Prostate gland (tissue), 2 donors: ENCODE measurements at regions of chr9 and their contacts with region 1.

Region 1: DNA sequence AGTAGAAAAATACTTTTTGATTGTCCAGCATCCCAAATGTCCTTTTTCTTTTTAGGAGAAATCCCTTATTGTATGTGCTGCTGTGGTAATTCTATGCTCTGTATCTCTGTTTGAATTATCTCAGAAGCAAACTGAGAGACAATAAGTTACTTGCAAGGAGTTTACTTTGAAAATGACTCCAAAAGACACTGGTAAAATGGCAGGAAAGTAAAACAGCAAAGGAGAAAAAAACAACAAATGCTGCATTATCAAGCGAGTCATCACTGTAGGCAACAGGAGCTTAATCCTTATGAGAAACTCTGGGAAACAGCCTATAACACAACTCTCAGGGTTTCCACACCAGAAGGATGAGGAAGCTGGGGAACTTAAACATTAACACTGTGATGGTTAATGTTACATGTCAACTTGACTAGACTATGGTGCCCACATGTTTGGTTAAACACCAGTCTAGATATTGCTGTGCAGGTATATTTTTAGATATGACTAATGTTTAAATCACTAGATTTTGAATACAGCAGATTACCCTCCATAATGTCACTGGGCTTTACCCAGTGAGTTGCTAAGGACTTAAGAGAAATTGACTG is 92.6 kb upstream of the GAS1 start:
- DNase-seq: no peak
- H3K4me3 ChIP-seq: no peak overlapping the region
- H3K27ac ChIP-seq: no peak overlapping the region
- H3K4me1 ChIP-seq: no peaks in the 10 kb centered on the region
- H3K27me3 ChIP-seq: no peaks in the 10 kb centered on the region
- CTCF ChIP-seq: no peak
- POLR2A ChIP-seq: no peak

Region 2: DNA sequence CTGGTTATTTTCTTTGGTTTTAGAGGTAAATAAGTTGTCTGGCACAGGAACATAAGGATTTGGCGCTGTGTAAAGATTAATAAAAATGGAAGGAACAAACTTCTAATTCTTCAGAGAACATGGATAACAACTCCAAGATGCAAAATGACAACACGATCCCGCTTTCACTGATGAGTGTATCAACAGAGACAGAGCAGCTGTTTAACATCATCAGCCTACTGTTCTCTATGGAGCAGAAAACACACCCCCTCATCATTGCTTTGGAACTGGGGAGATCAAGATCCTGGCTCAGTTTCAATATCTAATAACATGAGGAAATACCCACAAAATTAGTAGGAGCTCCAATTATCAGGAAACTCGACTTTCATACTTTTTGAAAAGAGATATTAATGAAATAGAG is 84.3 kb before region 1 on chr9:
- intact Hi-C with region 1: no loop called
- DNase-seq: no peak
- H3K4me3 ChIP-seq: no peak overlapping the region
- H3K27ac ChIP-seq: no peak overlapping the region
- H3K4me1 ChIP-seq: no peaks in the 10 kb centered on the region
- H3K27me3 ChIP-seq: no peaks in the 10 kb centered on the region
- CTCF ChIP-seq: no peak
- POLR2A ChIP-seq: no peak

Region 3: DNA sequence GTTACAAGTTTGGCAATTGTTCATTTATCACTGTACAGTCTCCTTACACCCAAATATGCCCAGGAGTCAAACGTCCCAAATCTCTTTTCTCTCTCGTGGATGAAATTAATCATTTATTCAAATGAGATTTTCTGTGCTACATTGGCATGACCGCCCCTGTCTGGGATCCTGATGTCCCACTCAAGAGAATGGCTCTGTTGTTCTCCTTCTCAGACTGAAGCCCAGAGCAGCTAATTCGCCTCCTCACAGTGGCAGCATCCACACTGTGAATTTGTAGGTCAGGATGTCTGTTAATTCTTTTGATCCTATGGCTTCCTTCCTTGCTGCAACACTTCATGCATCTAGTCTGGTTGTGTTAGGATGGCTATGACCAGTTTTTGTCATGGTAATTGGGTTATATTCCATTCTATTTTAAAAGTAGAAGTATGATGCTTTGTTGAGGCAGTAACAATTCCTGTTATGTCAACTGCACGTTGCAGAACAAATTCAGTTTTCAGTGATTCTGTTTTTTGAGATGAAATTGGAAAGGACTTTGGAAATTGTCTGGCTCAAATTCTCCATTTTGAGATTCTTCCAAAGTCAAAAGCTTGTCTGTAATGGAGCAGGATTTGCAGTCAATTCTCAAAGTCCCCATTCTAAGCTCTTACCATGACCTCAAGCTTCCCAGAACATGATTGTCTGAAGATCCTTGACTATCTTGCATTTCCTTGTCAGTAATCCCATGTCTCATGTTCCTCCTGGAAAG is 48.9 kb after region 1 on chr9:
- intact Hi-C with region 1: no loop called
- DNase-seq: no peak
- H3K4me3 ChIP-seq: no peak overlapping the region
- H3K27ac ChIP-seq: no peak overlapping the region
- H3K4me1 ChIP-seq: no peaks in the 10 kb centered on the region
- H3K27me3 ChIP-seq: no peaks in the 10 kb centered on the region
- CTCF ChIP-seq: no peak
- POLR2A ChIP-seq: no peak

Region 4: GRCh38 chr9:87119328-87119881 is 79.5 kb after region 1 on chr9:
- intact Hi-C with region 1: loop called (anchors 10 kb)
- DNase-seq: peak; percentile 89
- H3K4me3 ChIP-seq: no peak overlapping the region
- H3K27ac ChIP-seq: peak overlapping the region; percentile 72 to 78
- H3K4me1 ChIP-seq: peaks cover 19% of the 10 kb centered on the region
- H3K27me3 ChIP-seq: no peaks in the 10 kb centered on the region
- CTCF ChIP-seq: no peak
- POLR2A ChIP-seq: no peak

Region 5: GRCh38 chr9:87259543-87260518 is 219.9 kb after region 1 on chr9:
- intact Hi-C with region 1: loop called (anchors 10 kb)
- DNase-seq: no peak
- H3K4me3 ChIP-seq: no peak overlapping the region
- H3K27ac ChIP-seq: no peak overlapping the region
- H3K4me1 ChIP-seq: no peaks in the 10 kb centered on the region
- H3K27me3 ChIP-seq: no peaks in the 10 kb centered on the region
- CTCF ChIP-seq: no peak
- POLR2A ChIP-seq: no peak